Heart left ventricle (tissue), 16 donors: ENCODE measurements at regions of chr3 and their contacts with region 1.

Region 1: DNA sequence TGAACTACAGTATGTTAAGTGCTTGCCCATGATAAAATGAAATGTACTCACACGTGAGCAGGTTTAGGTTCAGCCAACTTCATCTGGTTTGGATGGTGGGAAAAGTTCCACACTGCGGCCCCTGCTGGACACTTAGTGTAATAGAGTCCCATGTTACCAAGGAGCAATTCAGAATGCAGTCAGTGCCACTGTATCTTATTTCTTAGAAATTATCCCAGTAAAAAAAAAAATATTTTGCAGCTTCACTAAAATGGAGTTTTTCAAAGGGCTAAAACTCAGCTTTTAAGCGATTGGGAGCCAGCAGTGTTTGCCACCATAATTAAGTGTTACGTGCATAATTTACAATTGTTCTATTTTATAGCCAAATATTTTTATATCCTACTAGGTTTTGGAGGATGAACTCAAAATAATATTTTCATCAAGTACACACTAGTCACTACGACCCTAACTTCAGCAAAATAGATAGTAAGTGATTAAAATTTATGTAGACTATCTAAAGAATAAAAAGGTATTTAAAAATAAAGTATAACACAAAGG is 371.7 kb upstream of the GBE1 start:
- DNase-seq: peak; percentile 46 to 60 (median 57)
- ATAC-seq: peak in 3 of 4 donors; percentile 81 to 82 (median 82)
- H3K4me3 ChIP-seq: no peak overlapping the region
- H3K27ac ChIP-seq: no peak overlapping the region
- H3K4me1 ChIP-seq: no peaks in the 10 kb centered on the region
- H3K27me3 ChIP-seq: no peaks in the 10 kb centered on the region
- CTCF ChIP-seq: peak; percentile 77 to 92 (median 84)
- POLR2A ChIP-seq: no peak

Region 2: GRCh38 chr3:81419228-81419627 is 713.9 kb before region 1 on chr3:
- intact Hi-C with region 1: loop called in 5 of 10 experiments (anchors 10 kb)
- DNase-seq: no peak
- ATAC-seq: no peak
- H3K4me3 ChIP-seq: no peak overlapping the region
- H3K27ac ChIP-seq: no peak overlapping the region
- H3K4me1 ChIP-seq: no peaks in the 10 kb centered on the region
- H3K27me3 ChIP-seq: no peaks in the 10 kb centered on the region
- CTCF ChIP-seq: peak; percentile 24 to 63 (median 52)
- POLR2A ChIP-seq: no peak

Region 3: GRCh38 chr3:81490541-81491288 is 642.4 kb before region 1 on chr3:
- intact Hi-C with region 1: loop called in 2 of 10 experiments (anchors 5 to 10 kb)
- DNase-seq: peak; percentile 41 to 84 (median 71)
- ATAC-seq: peak; percentile 55 to 92 (median 90)
- H3K4me3 ChIP-seq: no peak overlapping the region
- H3K27ac ChIP-seq: peak overlapping the region in 2 of 12 donors; percentile 30 to 31
- H3K4me1 ChIP-seq: peaks cover 0 to 29% (median 8%) of the 10 kb centered on the region in 12 donors
- H3K27me3 ChIP-seq: no peaks in the 10 kb centered on the region
- CTCF ChIP-seq: peak; percentile 63 to 82 (median 70)
- POLR2A ChIP-seq: no peak

Region 4: GRCh38 chr3:81676706-81677456 is 456.3 kb before region 1 on chr3:
- intact Hi-C with region 1: loop called in 1 of 10 experiments (anchors 5 kb)
- DNase-seq: no peak
- ATAC-seq: no peak
- H3K4me3 ChIP-seq: no peak overlapping the region
- H3K27ac ChIP-seq: no peak overlapping the region
- H3K4me1 ChIP-seq: no peaks in the 10 kb centered on the region
- H3K27me3 ChIP-seq: no peaks in the 10 kb centered on the region
- CTCF ChIP-seq: no peak
- POLR2A ChIP-seq: no peak

Region 5: GRCh38 chr3:81910244-81910852 is 222.8 kb before region 1 on chr3:
- intact Hi-C with region 1: loop called in 6 of 10 experiments (anchors 2 to 10 kb)
- DNase-seq: peak in 1 of 5 donors; percentile 12
- ATAC-seq: peak in 1 of 4 donors; percentile 63
- H3K4me3 ChIP-seq: no peak overlapping the region
- H3K27ac ChIP-seq: no peak overlapping the region
- H3K4me1 ChIP-seq: peaks cover 0 to 5% (median 0%) of the 10 kb centered on the region in 12 donors
- H3K27me3 ChIP-seq: no peaks in the 10 kb centered on the region
- CTCF ChIP-seq: peak; percentile 45 to 82 (median 74)
- POLR2A ChIP-seq: no peak

Region 6: GRCh38 chr3:82022836-82023235 is 110.3 kb before region 1 on chr3:
- intact Hi-C with region 1: loop called in 1 of 10 experiments (anchors 10 kb)
- DNase-seq: no peak
- ATAC-seq: no peak
- H3K4me3 ChIP-seq: no peak overlapping the region
- H3K27ac ChIP-seq: no peak overlapping the region
- H3K4me1 ChIP-seq: no peaks in the 10 kb centered on the region
- H3K27me3 ChIP-seq: no peaks in the 10 kb centered on the region
- CTCF ChIP-seq: no peak
- POLR2A ChIP-seq: no peak